PC-3 (cell line): ENCODE measurements at regions of chr17 and their contacts with region 1.

Region 1: DNA sequence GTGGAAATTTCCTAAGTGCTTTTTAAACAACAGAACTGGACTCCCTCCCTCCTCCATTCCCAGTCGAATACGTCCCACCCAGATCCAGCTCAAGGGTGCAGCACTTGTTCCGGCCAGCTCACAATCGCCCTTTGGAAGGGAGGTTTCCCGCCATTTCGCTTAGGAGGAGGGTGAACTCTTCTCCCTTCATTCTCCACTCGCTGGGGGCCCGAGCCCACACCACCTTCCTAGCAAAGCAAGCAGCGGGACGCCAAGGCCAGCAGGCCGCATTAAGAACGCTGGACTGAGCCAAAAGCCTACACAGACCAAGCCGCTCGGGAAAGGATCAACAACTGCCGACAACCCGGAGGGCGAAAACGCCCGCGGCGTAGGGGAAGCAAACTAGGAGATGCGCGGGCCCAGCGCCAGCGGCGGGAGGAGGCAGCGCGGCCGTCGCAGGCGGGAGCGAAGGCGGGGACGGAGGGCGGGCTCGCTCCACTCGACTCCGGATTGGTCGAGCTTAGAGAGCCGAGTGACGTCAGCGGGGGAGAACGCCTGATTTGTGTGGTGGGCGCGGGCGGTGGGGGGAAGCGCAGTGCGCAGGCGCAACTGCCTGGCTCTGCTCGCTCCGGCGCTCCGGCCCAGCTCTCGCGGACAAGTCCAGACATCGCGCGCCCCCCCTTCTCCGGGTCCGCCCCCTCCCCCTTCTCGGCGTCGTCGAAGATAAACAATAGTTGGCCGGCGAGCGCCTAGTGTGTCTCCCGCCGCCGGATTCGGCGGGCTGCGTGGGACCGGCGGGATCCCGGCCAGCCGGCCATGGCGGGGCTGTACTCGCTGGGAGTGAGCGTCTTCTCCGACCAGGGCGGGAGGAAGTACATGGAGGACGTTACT is at the start of gene PPM1D:
- DNase-seq: peak; percentile 99
- ATAC-seq: peak; percentile 86
- H3K4me3 ChIP-seq: peak within 1 kb of the TSS; percentile 81
- H3K27ac ChIP-seq: peak within 1 kb of the TSS; percentile 80
- H3K4me1 ChIP-seq: peaks cover 8% of the 10 kb centered on the region
- H3K27me3 ChIP-seq: no peaks in the 10 kb centered on the region
- CTCF ChIP-seq: no peak
- total RNA-seq, gene PPM1D: 8.2 and 8.4 TPM in 2 replicates

Region 2: GRCh38 chr17:60468371-60468770 is 131.5 kb before region 1 on chr17:
- CTCF ChIA-PET with region 1: no interaction called
- POLR2A ChIA-PET with region 1: interaction called, 10 read pairs
- intact Hi-C with region 1: no loop called
- DNase-seq: no peak
- ATAC-seq: no peak
- H3K4me3 ChIP-seq: no peak overlapping the region
- H3K27ac ChIP-seq: no peak overlapping the region
- H3K4me1 ChIP-seq: peaks cover 10% of the 10 kb centered on the region
- H3K27me3 ChIP-seq: no peaks in the 10 kb centered on the region
- CTCF ChIP-seq: no peak

Region 3: GRCh38 chr17:60577147-60577915 is 22.5 kb before region 1 on chr17:
- CTCF ChIA-PET with region 1: interaction called, 8 read pairs
- POLR2A ChIA-PET with region 1: interaction called, 3 read pairs
- intact Hi-C with region 1: loop called (anchors 1 kb)
- DNase-seq: peak; percentile 52
- ATAC-seq: peak; percentile 99
- H3K4me3 ChIP-seq: peak overlapping the region; percentile 66
- H3K27ac ChIP-seq: no peak overlapping the region
- H3K4me1 ChIP-seq: 0 out of 2 replicates have a peak, but pooled peaks cover 3% of the 10 kb centered on the region
- H3K27me3 ChIP-seq: no peaks in the 10 kb centered on the region
- CTCF ChIP-seq: peak; percentile 59

Region 4: DNA sequence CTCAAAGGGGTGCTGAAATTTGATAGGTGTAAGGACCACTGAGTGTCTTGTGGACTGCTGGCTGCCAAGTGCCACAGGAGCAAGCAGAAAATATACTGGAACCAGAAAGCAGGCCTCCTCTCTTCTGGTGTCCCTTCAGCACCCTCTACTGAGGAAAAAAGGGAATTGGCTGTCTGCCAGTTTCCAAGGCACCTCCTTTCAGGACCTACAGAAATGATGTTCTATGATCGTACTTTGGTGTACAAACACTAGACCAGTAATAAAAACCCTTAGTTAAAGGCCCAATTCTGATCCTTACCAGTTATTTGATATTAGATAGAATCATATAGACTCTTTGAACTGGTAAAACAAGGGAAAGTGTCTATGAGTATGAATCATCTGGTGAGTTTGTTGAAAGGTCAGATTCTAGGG is 42.0 kb after region 1 on chr17:
- CTCF ChIA-PET with region 1: interaction called, 17 read pairs
- POLR2A ChIA-PET with region 1: interaction called, 7 read pairs
- intact Hi-C with region 1: loop called (anchors 1 kb)
- DNase-seq: peak; percentile 93
- ATAC-seq: peak; percentile 80
- H3K4me3 ChIP-seq: no peak overlapping the region
- H3K27ac ChIP-seq: peak overlapping the region; percentile 25
- H3K4me1 ChIP-seq: peaks cover 13% of the 10 kb centered on the region
- H3K27me3 ChIP-seq: no peaks in the 10 kb centered on the region
- CTCF ChIP-seq: peak; percentile 81

Region 5: DNA sequence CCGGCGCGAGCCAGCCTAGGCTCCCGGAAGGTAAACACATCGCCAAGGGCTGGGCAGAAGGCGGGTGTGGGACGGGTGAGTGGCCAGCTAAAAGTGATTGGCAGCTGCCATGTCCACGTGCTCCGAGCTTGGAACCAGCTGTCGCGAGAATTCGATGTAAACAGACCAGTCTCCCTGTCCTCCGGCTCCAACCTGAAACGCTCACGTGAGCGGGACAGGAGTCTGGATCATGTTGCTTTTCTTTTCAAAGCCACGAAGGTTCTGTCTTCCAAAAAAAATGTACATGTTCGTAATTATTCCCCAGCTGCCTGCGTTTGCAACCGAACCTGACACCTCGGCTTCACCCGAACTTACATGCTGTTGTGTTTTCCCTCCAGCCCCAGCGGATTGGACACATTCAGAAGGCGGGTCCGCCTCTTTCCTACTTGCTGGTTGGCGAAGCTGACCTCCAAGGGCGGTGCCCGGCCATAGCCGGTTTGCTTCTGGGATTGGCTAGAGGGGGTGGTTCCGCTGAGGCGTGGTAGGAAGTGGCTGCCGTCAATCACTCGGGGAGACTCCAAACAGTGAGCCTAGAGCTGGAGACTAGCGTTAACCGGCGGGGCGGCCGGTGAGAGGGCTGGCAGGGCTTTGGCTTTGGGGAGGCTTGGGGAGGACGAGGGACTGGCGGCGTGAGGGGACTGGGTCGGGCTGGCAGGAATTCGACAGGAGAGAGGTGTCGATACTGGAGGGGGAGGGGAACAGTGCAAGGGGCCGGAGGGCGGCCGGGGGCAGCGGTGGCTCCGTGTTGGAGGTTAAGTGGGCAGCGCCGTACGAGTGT is 77.7 kb after region 1 on chr17 and contains the start of gene BCAS3:
- CTCF ChIA-PET with region 1: interaction called, 3 read pairs
- POLR2A ChIA-PET with region 1: no interaction called
- intact Hi-C with region 1: loop called (anchors 2 kb)
- DNase-seq: peak; percentile 100
- ATAC-seq: peak; percentile 96
- H3K4me3 ChIP-seq: peak within 1 kb of the TSS; percentile 83
- H3K27ac ChIP-seq: no peak within 1 kb of the TSS
- H3K4me1 ChIP-seq: peaks cover 17% of the 10 kb centered on the region
- H3K27me3 ChIP-seq: no peaks in the 10 kb centered on the region
- CTCF ChIP-seq: no peak
- total RNA-seq, gene BCAS3: 25.9 and 36.9 TPM in 2 replicates